ENCODE measurements at regions of chr1 and their contacts with region 1.

Region 1: DNA sequence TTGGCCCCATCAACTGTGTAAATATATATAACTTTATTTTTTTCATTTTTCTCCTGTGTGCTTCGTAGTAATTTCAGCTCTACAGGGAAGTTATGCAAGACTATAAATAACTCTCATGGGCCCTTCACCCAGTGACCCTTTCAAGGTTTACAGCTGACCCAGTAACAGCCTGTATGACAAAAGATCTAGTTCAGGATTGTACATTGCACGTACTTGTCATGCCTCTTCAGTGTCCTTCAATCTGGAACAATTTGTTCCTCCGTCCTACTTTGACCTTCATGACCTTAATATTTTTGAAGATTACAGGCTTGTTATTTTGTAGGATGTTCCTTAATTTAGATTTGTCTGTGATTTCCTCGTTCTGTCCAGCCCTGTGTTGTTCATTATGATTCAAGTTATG is 40.5 kb downstream of the BRINP2 start:
- DNase-seq: no peak
- H3K4me3 ChIP-seq: no peak overlapping the region
- H3K27ac ChIP-seq: no peak overlapping the region
- H3K4me1 ChIP-seq: peaks cover 0 to 16% (median 0%) of the 10 kb centered on the region in 4 donors
- H3K27me3 ChIP-seq: no peaks in the 10 kb centered on the region
- CTCF ChIP-seq: no peak
- EP300 ChIP-seq: no peak
- POLR2A ChIP-seq: no peak

Region 2: DNA sequence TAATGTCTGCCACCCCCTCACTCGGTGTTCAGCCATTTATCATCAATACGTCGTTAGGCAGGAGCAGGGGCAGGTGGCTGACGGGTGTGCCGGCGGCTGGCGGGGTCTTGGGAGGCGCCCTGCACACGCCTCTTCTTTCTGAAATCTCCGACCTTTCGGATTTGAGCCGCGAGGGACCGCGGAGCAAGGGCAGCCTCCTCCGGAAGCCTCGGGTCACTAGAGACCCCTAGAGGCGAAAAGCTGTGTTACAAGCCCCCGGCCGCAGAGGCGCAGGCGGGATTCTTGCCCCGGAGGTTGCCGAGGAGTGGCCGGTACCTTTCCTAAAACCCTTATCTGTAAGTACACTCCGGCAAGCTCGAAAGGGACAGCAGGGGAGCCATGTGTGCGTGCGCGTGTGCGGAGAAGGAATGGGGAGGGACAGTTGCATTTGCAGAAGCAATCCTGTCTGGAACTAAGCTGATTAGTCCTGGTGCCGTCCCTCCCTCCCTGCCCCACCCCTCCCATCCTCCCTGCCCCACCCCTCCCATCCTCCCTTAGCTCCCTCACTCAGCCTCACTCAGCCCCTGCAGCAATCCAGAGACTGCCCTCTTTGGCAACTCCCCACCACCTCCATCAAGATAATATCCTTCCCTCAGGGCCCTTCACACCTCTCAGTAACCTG is 29.5 kb before region 1 on chr1:
- in situ Hi-C with region 1: no loop called
- intact Hi-C with region 1: loop called (anchors 1 kb)
- DNase-seq: peak; percentile 37
- H3K4me3 ChIP-seq: peak overlapping the region in 1 of 4 donors; percentile 3
- H3K27ac ChIP-seq: no peak overlapping the region
- H3K4me1 ChIP-seq: peaks cover 0 to 7% (median 2%) of the 10 kb centered on the region in 4 donors
- H3K27me3 ChIP-seq: peaks cover 29% of the 10 kb centered on the region
- CTCF ChIP-seq: peak; percentile 55 to 75 (median 67)
- EP300 ChIP-seq: no peak
- POLR2A ChIP-seq: no peak